Activated T-helper 1 cell treated with anti-CD3 and anti-CD28 coated beads, Interleukin-12 subunit alpha, Interleukin-12 subunit beta, Interleukin-2, Interleukin-4 antibody, amounts not matched to agents 30 ng/mL and 10 ng/mL and 1 ng/mL, durations not matched to agents 14 hours and 24 hours and 36 hours (primary cell): ENCODE measurements at regions of chr1 and their contacts with region 1.

Region 1: GRCh38 chr1:203625628-203626019 is 1.0 kb upstream of the ATP2B4 start:
- DNase-seq: peak; percentile 55
- H3K4me3 Mint-ChIP-seq: peak overlapping the region; percentile 92
- H3K27ac Mint-ChIP-seq: peak overlapping the region; percentile 86
- H3K4me1 Mint-ChIP-seq: peaks cover 87% of the 10 kb centered on the region
- H3K27me3 Mint-ChIP-seq: no peaks in the 10 kb centered on the region

Region 2: DNA sequence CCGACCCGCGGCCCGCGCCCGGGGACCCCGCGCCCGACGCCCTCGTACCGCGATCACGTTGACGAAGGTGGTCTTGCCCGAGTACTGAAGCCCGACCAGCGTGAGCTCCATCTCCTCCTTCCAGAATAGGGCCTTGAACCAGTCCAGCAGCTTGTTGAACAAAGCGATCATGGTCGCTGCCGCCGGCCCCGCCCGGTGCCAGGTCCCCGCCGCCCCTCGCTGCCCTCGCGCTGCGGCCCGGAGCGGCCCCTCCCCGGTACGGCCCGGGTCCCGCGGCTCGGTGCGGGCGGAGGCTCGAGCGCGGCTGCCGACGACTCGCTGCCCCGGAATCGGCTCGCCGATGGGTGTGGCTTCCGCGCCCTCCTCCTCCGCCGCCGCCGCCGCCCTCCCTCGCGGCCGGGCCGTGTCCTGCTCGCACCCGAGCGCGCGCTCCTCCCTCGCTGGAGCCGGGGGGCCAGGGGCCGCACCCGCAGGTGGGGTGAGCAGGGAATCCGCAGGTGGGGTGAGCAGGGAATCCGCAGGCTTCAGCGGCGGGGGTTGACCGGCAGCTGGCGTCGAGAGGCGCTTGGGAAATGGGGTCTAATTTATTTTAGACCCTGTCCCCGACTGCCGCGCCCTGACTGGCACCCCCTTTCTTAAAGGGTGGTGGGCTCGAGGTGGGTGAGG is 1481.1 kb before region 1 on chr1 and contains the start of gene ARL8A:
- intact Hi-C with region 1: loop called (anchors 10 kb)
- DNase-seq: peak; percentile 71
- H3K4me3 Mint-ChIP-seq: peak within 1 kb of the TSS; percentile 88
- H3K27ac Mint-ChIP-seq: peak within 1 kb of the TSS; percentile 91
- H3K4me1 Mint-ChIP-seq: peaks cover 26% of the 10 kb centered on the region
- H3K27me3 Mint-ChIP-seq: no peaks in the 10 kb centered on the region
- total RNA-seq, gene ARL8A: 56.6 and 69.0 TPM in 2 replicates

Region 3: DNA sequence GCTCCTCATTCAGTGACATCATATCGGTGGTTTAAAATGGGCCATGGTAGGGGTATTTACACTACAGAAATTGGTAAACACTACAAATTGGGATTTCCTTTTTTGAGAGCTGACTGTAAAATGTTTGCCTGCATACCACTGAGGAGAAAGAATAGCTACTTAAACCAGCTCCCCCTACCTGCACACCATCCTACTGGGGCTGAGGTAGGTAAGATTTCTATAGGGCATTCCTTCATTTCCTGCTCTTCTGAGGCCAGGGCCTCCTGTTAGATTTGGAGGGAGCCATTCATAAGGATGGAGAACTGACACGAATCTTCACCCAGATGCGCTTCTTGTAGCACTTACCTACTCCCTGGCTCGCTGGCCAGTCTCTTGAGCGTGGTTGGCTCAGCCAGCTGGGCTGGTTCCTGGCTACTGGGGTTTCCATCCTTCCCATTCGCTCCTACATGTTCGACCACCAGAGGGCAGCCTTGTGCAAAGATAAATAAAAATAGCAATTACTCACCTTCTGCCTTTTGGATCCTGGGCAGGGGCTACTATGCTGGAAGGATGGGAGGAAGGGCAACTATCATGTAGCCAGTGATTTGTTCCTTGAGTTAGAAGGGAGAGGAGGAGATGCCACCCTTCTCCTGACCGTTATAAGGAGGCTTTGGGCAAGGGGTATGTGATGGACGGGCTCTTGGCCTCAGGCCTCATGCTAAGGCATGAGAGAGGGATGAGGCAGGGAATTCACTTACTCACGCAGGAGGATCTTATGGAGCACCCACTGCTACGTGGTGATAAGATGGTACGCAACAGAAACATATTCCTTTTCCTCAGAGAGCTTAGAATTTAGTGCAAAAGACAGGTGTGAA is 121.0 kb before region 1 on chr1:
- intact Hi-C with region 1: loop called (anchors 2 kb)
- DNase-seq: peak; percentile 59
- H3K4me3 Mint-ChIP-seq: no peak overlapping the region
- H3K27ac Mint-ChIP-seq: no peak overlapping the region
- H3K4me1 Mint-ChIP-seq: peaks cover 8% of the 10 kb centered on the region
- H3K27me3 Mint-ChIP-seq: peaks cover 9% of the 10 kb centered on the region

Region 4: DNA sequence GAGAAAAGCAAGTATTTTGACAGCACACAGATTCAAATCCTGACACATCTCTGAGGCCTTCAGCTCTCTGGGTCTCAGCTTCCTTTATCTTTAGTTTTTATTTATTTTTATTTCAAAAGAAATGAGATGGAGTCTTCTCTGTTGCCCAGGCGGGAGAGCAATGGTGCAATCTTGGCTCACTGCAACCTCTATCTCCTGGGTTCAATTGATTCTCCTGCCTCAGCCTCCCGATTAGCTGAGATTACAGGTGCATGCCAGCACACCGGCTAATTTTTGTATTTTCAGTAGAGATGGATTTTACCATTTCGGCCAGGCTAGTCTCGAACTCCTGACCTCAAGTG is 18.1 kb before region 1 on chr1:
- intact Hi-C with region 1: loop called (anchors 1 kb)
- DNase-seq: no peak
- H3K4me3 Mint-ChIP-seq: no peak overlapping the region
- H3K27ac Mint-ChIP-seq: peak overlapping the region; percentile 99
- H3K4me1 Mint-ChIP-seq: peaks cover 52% of the 10 kb centered on the region
- H3K27me3 Mint-ChIP-seq: no peaks in the 10 kb centered on the region

Region 5: GRCh38 chr1:203673550-203674427 is 48.2 kb after region 1 on chr1:
- intact Hi-C with region 1: loop called (anchors 1 kb)
- DNase-seq: peak; percentile 71
- H3K4me3 Mint-ChIP-seq: peak overlapping the region; percentile 70
- H3K27ac Mint-ChIP-seq: peak overlapping the region; percentile 92
- H3K4me1 Mint-ChIP-seq: peaks cover 56% of the 10 kb centered on the region
- H3K27me3 Mint-ChIP-seq: no peaks in the 10 kb centered on the region

Region 6: DNA sequence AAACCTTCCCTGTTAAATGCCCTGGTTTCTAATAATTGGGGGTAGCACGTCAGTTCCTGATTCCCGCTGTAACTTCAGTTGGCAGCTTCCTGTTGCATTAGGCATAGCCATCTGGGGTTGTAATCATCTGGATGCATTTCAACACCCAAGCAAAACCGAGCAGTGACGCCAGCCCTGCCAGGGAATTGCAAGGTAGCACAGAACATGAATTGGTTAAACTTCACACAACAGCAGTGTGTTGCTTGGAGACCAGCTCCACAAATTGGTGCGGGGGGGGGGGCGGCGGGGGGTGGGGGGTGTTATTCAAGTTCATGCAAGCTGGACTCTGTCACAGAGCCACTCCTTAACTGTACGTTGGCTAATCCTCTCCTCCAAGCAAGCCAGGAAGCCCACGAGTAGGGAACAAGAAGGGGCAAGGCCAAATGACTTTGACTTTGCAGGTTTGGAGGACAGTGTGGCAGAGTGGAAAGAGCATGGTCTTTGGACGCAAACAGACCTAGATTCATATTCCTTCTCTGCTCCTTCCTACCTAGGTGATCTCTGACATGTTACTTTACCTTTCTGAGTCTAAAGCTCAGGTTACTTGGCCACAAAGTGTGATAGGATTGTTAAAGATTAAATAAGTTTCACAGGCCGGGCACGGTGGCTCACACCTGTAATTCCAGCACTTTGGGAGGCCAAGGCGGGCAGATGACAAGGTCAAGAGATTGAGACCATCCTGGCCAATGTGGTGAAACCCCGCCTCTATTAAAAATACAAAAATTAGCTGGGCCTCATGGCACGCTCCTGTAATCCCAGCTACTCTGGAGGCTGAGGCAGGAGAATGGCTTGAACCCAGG is 144.1 kb after region 1 on chr1:
- intact Hi-C with region 1: loop called (anchors 1 kb)
- DNase-seq: no peak
- H3K4me3 Mint-ChIP-seq: no peak overlapping the region
- H3K27ac Mint-ChIP-seq: no peak overlapping the region
- H3K4me1 Mint-ChIP-seq: peaks cover 27% of the 10 kb centered on the region
- H3K27me3 Mint-ChIP-seq: no peaks in the 10 kb centered on the region